Left cardiac atrium (tissue), 4 donors: ENCODE measurements at regions of chr1 and their contacts with region 1.

Region 1: GRCh38 chr1:200561856-200562214 is 58.7 kb downstream of the KIF14 start:
- DNase-seq: no peak
- ATAC-seq: no peak

Region 2: DNA sequence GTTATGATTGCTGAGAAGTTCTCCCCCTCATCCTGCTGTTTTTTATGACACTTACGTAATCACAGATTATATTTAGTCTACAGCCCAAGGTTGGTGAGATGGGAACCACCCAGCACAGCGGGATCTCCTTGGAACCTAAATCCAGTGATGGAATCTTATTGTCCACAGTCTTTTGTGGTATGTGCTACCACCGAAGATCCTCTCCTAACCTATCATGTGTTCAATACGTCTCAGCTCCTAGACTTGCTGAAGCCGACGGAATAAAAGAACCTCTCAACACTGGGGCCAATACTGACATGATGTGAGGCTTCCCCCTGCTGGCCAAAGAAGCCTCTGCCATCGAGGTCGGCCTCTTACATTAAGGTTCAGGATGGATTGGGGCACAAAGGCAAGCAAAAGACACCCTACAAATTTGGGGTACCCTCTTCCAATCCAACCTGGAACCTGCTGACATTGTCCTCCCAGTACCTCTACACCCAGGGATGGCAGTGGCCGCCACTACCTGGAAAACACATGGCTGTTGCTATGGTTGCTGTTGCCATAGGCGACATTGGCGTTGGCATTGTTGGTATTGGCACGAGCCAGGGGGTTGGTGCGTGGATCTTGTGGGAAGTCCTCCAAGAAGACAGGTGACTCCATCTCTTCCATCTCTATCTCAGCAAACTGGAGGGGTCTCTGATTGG is 481.1 kb after region 1 on chr1:
- intact Hi-C with region 1: loop called in 1 of 2 experiments (anchors 5 kb)
- DNase-seq: peak; percentile 67
- ATAC-seq: peak; percentile 85 to 86

Region 3: GRCh38 chr1:201114236-201115131 is 552.6 kb after region 1 on chr1:
- intact Hi-C with region 1: loop called in 1 of 2 experiments (anchors 5 kb)
- DNase-seq: peak; percentile 88
- ATAC-seq: peak; percentile 95 to 96